H1 (cell line): ENCODE measurements at regions of chr19 and their contacts with region 1.

Region 1: DNA sequence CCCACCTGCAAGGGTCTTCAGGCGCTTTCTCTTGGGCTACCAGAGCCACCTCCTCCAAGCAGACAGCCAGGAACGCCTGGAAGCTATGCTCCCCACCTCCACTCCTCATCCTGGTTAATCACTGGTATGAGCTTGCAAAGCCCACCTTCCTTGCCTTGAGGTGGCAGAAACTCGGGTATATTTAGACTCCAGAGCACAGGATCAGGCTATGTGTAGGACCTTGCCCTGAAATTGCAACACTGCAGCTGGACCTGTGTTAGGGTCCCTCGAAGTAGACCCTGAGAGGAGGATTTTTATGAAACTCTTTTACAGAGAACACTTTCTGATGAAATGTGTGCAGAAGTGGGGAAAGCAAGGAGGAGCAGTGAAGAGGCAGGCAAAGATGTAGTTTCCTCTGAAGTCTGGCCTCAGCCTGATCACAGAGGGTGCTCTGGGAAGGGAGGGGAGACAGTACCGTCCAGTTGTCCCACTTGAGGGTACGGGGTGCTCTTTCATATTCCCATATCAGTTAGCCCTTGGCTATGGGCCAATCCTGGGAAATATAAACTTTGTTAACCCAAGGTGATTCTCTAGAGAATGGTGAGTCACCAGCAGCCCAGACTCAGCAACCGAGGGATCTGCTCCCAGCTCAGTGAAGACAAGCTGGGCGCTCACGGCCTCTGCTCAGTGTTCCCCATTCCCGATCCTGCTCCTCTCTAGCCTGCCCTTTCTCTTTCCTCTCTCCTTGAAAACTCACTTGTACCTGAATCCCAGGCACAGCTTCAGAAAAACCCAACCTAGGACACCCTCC is 157.9 kb downstream of the UQCRFS1 start:
- DNase-seq: no peak
- H3K4me3 ChIP-seq: no peak overlapping the region
- H3K27ac ChIP-seq: no peak overlapping the region
- H3K4me1 ChIP-seq: no peaks in the 10 kb centered on the region; a peak in 1 of 7 replicates
- H3K27me3 ChIP-seq: no peaks in the 10 kb centered on the region
- CTCF ChIP-seq: no peak
- EP300 ChIP-seq: no peak
- POLR2A ChIP-seq: no peak
- RAD21 ChIP-seq: no peak

Region 2: DNA sequence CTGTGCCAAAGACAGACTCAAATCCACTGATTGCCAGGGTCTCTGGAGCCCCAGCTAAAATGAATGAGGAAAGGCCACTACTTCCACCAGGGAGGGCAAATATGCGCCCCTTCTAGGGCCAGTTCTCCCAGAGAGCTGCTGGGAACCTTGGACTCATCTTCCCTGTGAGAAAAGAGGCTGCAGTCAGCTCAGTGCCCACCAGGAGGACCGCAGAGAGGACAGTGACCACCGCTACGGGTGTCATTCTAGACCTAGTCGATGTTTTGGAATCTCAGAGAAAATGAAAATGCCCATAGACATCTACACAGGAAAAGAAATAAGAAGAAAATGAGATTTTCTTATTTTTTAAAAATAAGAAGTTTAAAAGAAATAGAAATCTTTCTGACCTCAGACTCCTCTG is 77.3 kb before region 1 on chr19:
- CTCF ChIA-PET with region 1: interaction called, 10 read pairs
- POLR2A ChIA-PET with region 1: no interaction called
- DNase-seq: peak in 1 of 2 experiments; percentile 52
- H3K4me3 ChIP-seq: no peak overlapping the region
- H3K27ac ChIP-seq: no peak overlapping the region
- H3K4me1 ChIP-seq: no peaks in the 10 kb centered on the region; a peak in 1 of 7 replicates
- H3K27me3 ChIP-seq: no peaks in the 10 kb centered on the region
- CTCF ChIP-seq: peak; percentile 45 to 61 (median 60)
- EP300 ChIP-seq: no peak
- POLR2A ChIP-seq: no peak
- RAD21 ChIP-seq: peak; percentile 39 to 55

Region 3: GRCh38 chr19:29092712-29093552 is 37.9 kb after region 1 on chr19:
- CTCF ChIA-PET with region 1: interaction called, 10 read pairs
- POLR2A ChIA-PET with region 1: no interaction called
- DNase-seq: no peak
- H3K4me3 ChIP-seq: no peak overlapping the region
- H3K27ac ChIP-seq: no peak overlapping the region
- H3K4me1 ChIP-seq: peaks cover 0 to 14% (median 2%) of the 10 kb centered on the region in 4 experiments; a peak in 5 of 7 replicates
- H3K27me3 ChIP-seq: no peaks in the 10 kb centered on the region
- CTCF ChIP-seq: no peak
- EP300 ChIP-seq: no peak
- POLR2A ChIP-seq: no peak
- RAD21 ChIP-seq: no peak

Region 4: GRCh38 chr19:29172302-29172701 is 117.2 kb after region 1 on chr19:
- CTCF ChIA-PET with region 1: no interaction called
- POLR2A ChIA-PET with region 1: no interaction called
- DNase-seq: no peak
- H3K4me3 ChIP-seq: no peak overlapping the region
- H3K27ac ChIP-seq: no peak overlapping the region
- H3K4me1 ChIP-seq: no peaks in the 10 kb centered on the region
- H3K27me3 ChIP-seq: no peaks in the 10 kb centered on the region
- CTCF ChIP-seq: no peak
- EP300 ChIP-seq: no peak
- POLR2A ChIP-seq: no peak
- RAD21 ChIP-seq: no peak